ENCODE measurements at regions of chr1 and their contacts with region 1.

Region 1: DNA sequence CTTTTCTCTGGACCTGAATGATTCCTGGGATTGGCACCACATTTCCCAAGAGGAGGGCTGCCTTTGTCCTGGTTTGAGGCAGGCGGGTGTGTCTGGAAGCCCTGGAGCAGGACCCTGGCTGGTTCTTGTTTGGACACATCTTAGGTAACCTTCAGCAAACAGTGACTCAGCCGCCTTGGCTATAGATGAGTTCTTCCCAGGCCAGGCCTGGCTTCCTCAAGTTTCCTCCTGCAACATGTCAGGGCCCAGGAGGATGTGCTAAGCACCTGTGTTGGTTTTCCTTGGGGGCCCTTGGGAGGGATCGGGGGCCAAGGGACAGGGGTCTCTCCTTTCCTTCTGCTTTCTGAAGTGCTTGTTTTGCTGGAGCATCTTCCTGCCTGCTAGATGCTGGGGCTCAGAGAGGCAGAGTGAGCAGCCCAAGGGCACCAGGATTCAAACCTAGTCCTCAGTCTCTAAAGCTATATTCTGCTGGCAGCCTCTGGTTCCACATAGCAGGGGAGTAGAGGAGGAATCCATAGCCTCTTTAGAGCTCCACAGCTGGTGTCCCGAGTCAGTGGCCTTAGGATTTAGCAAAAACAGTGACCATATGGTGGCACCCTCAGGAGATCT is 38.3 kb downstream of the PAX7 start:
- DNase-seq: no peak
- ATAC-seq: no peak
- H3K4me3 Mint-ChIP-seq: no peak overlapping the region
- H3K27ac Mint-ChIP-seq: no peak overlapping the region
- H3K4me1 Mint-ChIP-seq: peaks cover 12% of the 10 kb centered on the region
- H3K27me3 Mint-ChIP-seq: no peaks in the 10 kb centered on the region

Region 2: DNA sequence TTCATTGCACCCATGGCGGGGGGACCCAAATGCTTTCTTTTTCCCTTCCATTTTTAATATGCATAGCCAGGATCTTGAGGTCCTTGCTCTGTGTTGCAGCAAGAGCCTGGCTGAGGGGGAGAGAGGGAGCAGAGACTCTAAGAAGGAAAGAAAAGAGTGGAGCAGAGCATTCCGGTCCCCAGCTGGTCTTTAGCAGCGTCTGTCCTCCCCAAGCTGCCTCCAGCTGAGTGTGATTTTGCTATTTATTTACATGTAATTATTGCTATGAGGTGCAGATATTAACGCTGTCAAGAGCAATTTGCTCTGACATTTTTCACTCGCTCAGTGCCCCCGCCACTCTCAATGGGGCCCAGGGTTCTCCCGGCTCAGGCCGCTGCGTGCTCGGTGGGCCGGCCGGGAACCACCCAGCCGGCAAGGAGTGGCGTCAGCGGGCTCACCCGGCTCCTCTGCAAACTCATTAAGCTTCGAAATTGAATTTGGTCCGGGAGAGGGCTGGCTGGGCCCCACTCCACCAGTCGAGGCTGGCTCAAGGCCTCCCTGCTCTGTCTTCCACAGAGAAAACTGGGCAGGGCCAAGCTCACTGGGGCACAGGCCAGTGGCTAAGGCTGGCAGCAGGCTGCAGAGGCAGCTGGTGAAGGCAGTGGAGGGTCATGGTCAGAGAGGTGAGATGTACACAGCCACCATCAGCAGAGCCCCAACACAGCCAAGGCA is 55.0 kb after region 1 on chr1:
- CTCF ChIA-PET with region 1: no interaction called
- POLR2A ChIA-PET with region 1: no interaction called
- intact Hi-C with region 1: loop called in 1 of 2 experiments (anchors 10 kb)
- DNase-seq: no peak
- ATAC-seq: no peak
- H3K4me3 Mint-ChIP-seq: no peak overlapping the region
- H3K27ac Mint-ChIP-seq: no peak overlapping the region
- H3K4me1 Mint-ChIP-seq: no peaks in the 10 kb centered on the region
- H3K27me3 Mint-ChIP-seq: peaks cover 55% of the 10 kb centered on the region

Measured in activated CD4-positive, alpha-beta T cell treated with anti-CD3 and anti-CD28 coated beads for 36 hours (primary cell).